BJ (cell line): ENCODE measurements at regions of chr19 and their contacts with region 1.

Region 1: GRCh38 chr19:18478569-18479311 is 40.8 kb upstream of the ISYNA1 start:
- DNase-seq: peak; percentile 72
- H3K4me3 ChIP-seq: no peak overlapping the region
- H3K27me3 ChIP-seq: no peaks in the 10 kb centered on the region
- CTCF ChIP-seq: no peak

Region 2: DNA sequence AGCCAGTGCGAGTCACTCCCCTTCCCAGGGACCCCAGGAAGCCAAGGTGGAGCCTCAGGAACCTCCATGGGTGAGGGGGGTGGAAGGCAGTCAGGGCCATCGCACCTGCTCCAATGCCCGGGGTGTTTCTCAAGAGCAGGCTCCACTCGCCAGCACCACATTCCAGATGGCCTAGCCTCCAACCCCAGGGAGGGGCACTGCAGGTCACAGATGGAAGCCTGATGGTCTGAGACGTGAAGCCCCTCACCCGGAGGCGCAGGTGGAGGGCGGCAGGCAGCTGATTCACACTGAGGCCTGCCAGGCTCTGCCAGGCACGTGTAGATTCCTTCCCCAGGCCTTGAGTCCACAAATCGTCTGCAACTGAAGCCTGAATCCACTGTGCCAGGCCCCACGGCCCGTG is 17.8 kb before region 1 on chr19:
- CTCF ChIA-PET with region 1: interaction called, 39 read pairs
- POLR2A ChIA-PET with region 1: interaction called, 6 read pairs
- DNase-seq: no peak
- H3K4me3 ChIP-seq: no peak overlapping the region
- H3K27me3 ChIP-seq: no peaks in the 10 kb centered on the region
- CTCF ChIP-seq: no peak

Region 3: DNA sequence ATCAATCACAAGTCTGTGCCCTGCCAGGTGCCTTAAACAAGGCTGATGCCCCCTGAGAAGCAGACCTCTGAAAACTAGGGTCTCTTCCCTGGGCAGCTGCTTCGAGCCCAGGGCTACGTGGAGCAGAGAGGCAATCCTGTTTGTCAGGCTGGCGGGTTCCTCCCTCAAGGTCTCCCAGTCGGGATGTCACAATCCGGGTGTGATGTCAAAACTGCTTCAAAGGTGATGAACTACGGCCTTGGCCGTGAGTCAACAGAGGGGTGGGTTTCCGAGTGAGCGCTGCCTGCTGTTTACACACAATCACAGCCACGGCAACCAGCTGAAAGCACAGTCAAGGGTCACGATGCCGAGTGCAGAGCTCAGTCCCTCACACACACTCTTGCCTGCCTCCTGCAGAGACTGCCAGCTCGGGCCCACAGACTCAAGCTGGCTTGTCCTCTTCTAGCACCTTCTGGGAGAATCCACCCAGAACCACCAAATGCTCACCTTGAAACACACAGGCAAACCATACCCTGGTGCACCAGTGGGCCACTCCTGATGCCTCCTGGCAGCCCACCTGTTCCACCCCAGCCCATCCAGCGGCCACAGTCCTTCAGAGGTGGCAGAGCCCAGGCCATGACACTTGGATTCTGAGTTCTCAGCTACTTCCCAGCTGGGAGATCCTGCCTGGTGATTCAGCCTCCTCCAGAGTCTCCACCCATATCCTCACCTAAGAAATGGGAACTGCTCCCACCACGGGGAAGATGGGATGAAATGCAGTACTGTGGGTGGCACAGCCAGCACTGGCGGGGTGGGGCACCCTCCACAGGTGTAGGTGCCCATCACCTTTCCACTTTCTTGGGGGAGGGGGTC is 36.3 kb after region 1 on chr19:
- CTCF ChIA-PET with region 1: interaction called, 11 read pairs
- POLR2A ChIA-PET with region 1: interaction called, 10 read pairs
- DNase-seq: no peak
- H3K4me3 ChIP-seq: no peak overlapping the region
- H3K27me3 ChIP-seq: no peaks in the 10 kb centered on the region
- CTCF ChIP-seq: no peak

Region 4: GRCh38 chr19:18521885-18522624 is 43.3 kb after region 1 on chr19 and contains the start of gene ELL:
- CTCF ChIA-PET with region 1: interaction called, 11 read pairs
- POLR2A ChIA-PET with region 1: no interaction called
- DNase-seq: peak; percentile 100
- H3K4me3 ChIP-seq: peak within 1 kb of the TSS; percentile 100
- H3K27me3 ChIP-seq: no peaks in the 10 kb centered on the region
- CTCF ChIP-seq: peak; percentile 36
- polyA plus RNA-seq, gene ELL: 4.4 and 10.2 TPM in 2 replicates